Left colon (tissue), 2 donors: ENCODE measurements at regions of chr4 and their contacts with region 1.

Region 1: GRCh38 chr4:82373816-82374625 is at the start of gene HNRNPD:
- DNase-seq: peak; percentile 97 to 99
- ATAC-seq: peak; percentile 83
- total RNA-seq, gene HNRNPD: 108 to 151 TPM

Region 2: DNA sequence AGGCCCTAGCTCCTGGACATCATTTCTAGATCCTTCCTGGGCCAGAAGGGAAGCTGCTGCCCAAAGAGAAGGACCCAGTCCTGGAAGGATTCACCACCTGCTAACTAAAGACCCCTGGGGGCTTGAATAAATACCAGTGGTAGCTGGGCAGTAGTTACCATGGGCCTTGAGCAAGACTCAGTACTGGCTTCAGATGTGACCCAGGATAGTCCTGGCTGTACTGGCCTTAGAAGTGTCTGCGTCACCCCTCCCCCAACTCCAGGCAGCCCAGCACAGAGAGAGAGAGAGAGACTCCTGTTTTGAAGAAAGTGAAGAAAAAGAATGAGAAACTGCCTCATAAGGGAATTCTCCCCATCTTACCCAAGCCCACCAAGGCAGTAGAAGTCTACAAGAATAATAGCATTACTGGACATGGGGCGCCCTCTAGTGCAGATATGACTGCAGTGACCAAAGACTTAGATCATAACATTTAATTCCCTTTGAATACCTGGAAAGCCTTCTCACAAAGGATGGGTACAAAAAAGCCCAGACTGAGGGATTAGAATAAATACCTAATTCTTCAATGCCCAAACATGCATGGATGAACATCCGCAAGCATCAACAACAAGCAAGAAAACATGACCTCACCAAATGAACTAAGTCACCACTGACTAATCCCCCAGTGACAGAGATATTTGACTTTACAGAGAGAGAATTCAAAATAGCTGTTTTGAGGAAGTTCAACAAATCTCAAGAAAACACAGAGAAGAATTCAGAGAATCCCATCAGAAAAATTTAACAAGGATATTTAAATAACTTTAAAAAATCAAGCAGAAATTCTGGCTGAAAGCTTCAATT is 172.0 kb before region 1 on chr4:
- intact Hi-C with region 1: no loop called
- DNase-seq: peak in 1 of 2 donors; percentile 58
- ATAC-seq: peak; percentile 49

Region 3: DNA sequence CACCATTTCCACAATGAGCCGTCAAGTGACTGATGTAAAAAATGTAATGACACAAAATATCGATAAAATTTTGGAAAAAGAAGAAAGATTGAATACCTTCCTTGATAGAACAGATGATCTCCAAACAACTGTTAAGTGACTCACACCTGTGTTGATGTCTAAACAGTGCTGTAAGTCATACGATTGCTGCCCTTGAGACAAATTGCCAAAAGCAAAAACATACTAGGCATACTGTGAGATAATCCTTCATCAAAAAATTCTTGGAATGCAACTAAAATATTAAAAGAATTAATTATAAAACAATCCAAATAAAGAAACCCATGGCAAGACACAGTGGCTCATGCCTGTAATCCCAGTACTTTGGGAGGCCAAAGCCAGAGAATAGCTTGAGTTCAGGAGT is 53.7 kb before region 1 on chr4:
- intact Hi-C with region 1: no loop called
- DNase-seq: no peak
- ATAC-seq: no peak

Region 4: DNA sequence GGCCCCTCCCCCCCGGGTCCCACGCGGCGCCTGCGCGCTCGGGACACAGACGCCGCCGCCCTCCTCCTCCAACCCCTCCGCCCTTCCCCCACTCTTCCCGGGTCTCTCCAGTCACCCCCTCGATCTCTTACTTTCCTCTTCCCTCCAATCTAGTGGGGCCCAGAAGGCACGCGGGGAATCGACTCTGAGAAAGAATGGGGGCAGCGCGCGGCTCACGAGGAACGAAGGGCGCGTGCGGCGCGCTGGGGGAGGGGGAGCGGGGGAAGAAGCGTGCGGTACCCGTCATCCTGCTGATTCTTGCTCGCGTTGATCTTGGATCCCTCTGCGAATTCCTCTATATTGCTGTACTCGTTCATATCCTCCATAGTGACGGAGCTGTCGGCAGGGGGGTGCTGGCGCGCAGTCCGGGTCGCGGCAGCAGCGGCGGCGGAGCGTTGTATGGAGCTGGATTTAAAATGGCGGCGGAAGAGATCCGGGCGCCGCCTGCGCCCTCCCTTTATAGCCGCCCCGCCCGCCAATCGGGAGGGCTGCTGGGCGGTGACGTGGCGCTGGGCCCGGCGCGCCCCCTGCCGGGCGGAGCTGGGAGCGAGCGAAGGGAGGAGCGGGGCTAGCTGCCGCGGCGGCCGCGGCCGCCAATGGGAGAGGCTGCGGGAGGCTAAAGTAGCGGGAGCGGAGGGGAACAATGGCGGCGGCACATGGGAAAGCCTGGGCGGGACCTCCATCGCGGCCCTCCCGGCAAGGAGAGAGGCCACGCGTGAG is 55.1 kb after region 1 on chr4:
- intact Hi-C with region 1: loop called (anchors 10 kb)
- DNase-seq: peak; percentile 86 to 93
- ATAC-seq: peak; percentile 73

Region 5: DNA sequence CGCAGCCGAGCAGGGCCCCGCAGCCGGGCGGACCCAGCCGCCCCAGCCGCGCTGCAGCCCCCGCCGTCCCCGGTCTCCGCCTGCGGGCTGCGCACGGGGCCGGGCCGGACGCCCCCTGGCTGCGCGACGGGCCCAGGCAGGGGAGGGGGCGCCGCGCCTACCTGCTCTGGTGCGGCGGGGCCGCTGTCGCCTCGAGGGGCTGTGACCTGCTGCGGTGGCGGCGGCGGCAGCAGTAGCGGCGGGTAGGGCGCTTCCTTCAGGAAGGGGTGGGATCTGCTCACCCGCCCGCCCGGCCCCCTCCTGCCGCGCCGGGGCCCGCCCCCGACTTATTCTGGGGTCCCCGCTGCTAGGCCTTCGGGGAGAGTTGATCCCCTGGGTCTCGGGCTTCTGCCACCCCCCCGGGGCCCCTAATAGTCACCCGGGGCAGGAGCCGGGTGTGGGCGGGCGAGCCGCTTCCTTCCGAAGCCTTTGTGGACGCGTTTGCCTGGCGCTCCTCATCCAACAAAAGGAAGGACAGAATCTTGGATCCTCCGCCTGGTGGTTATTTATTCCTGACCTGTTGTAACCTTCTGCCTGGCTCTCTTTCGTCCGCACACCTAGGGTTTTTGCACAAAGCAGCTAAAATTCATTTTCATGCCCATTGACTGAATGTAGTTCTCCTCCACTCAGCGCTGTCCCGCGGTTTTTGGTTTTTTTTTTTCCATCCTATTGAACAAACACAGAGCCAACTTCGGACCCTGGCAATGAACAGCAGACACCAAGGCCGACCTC is 187.9 kb after region 1 on chr4 and contains the start of gene TMEM150C:
- intact Hi-C with region 1: no loop called
- DNase-seq: peak; percentile 25 to 29
- ATAC-seq: peak; percentile 77
- total RNA-seq, gene TMEM150C: 1.8 to 3.7 TPM

Region 6: GRCh38 chr4:83455281-83456129 is 1081.5 kb after region 1 on chr4 and contains the starts of genes HELQ and MRPS18C:
- intact Hi-C with region 1: loop called in 1 of 2 experiments (anchors 10 kb)
- DNase-seq: peak; percentile 95 to 98
- ATAC-seq: peak; percentile 95
- total RNA-seq, gene HELQ: 10.5 to 14.5 TPM
- total RNA-seq, gene MRPS18C: 36.0 to 37.7 TPM